Naive thymus-derived CD4-positive, alpha-beta T cell (primary cell): ENCODE measurements at regions of chr17 and their contacts with region 1.

Region 1: DNA sequence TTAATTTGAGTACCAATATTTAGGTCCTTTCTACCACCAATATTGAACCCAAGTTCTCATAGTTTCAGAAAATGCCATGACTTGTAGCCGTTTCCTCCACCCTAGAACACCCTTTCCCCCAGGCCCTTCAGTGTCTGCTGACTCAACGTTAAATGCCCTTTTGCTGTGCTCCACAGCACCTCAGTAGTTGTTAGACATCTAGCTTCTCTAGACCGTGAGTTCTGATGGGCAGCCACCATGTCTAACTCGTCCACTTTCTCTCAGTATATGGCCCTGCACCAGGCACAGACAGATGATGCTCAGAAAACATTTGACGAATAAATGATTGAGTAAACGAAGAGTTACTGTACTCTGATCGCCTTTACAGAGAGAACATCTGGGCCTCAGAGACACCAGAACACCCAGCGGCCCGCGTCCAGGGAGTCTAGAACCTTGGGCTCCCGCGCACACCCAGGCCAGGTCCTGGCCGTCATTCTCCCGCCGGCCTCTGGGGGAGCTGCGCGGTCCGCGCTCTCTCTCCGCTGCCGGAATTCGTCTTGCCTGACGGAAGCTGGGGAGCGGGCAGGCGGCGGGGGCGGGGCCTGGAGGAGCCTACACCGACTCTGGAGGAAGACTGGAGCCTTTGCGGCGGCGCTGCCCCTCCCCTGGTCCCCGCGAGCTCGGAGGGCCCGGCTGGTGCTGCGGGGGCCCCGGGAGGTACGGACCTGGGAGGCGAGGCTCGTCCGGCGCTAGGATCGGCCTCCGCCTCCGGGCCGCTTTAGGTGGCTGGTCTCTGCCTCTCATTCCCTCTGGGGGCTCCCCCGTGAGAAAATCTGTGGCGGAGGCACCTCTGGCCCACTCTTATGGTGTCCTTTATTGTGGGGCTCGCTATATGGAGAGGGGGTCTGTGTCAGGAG is at the start of gene NKIRAS2:
- DNase-seq: peak; percentile 83 to 97 (median 89)
- ATAC-seq: peak; percentile 88
- H3K4me3 ChIP-seq: peak within 1 kb of the TSS; percentile 85
- H3K4me3 Mint-ChIP-seq: peak within 1 kb of the TSS; percentile 91 to 100 (median 99)
- H3K27ac ChIP-seq: peak within 1 kb of the TSS; percentile 84
- H3K27ac Mint-ChIP-seq: peak within 1 kb of the TSS; percentile 77 to 99 (median 90)
- H3K4me1 ChIP-seq: peaks cover 32 to 37% of the 10 kb centered on the region in 2 donors
- H3K4me1 Mint-ChIP-seq: peaks cover 44 to 69% (median 56%) of the 10 kb centered on the region in 7 donors
- H3K27me3 ChIP-seq: no peaks in the 10 kb centered on the region
- H3K27me3 Mint-ChIP-seq: no peaks in the 10 kb centered on the region
- total RNA-seq, gene NKIRAS2: 14.3 to 24.0 (median 20.4) TPM

Region 2: GRCh38 chr17:41918314-41919164 is 101.2 kb before region 1 on chr17 and contains the start of gene ACLY:
- CTCF ChIA-PET with region 1: interaction called, 4 read pairs
- POLR2A ChIA-PET with region 1: no interaction called
- intact Hi-C with region 1: loop called (anchors 1 kb)
- DNase-seq: peak; percentile 88 to 99 (median 92)
- ATAC-seq: peak; percentile 100
- H3K4me3 ChIP-seq: peak within 1 kb of the TSS; percentile 94
- H3K4me3 Mint-ChIP-seq: peak within 1 kb of the TSS; percentile 84 to 99 (median 89)
- H3K27ac ChIP-seq: peak within 1 kb of the TSS; percentile 79
- H3K27ac Mint-ChIP-seq: peak within 1 kb of the TSS; percentile 48 to 97 (median 78)
- H3K4me1 ChIP-seq: peaks cover 8 to 14% of the 10 kb centered on the region in 2 donors
- H3K4me1 Mint-ChIP-seq: peaks cover 29 to 48% (median 35%) of the 10 kb centered on the region in 7 donors
- H3K27me3 ChIP-seq: no peaks in the 10 kb centered on the region
- H3K27me3 Mint-ChIP-seq: no peaks in the 10 kb centered on the region
- total RNA-seq, gene ACLY: 59.2 to 154 (median 70.8) TPM

Region 3: GRCh38 chr17:41966463-41967140 is 53.2 kb before region 1 on chr17 and contains the start of gene CNP:
- CTCF ChIA-PET with region 1: interaction called, 5 read pairs
- POLR2A ChIA-PET with region 1: interaction called, 71 read pairs
- intact Hi-C with region 1: loop called (anchors 1 kb)
- DNase-seq: peak; percentile 84 to 94 (median 88)
- ATAC-seq: peak; percentile 94
- H3K4me3 ChIP-seq: peak within 1 kb of the TSS; percentile 87
- H3K4me3 Mint-ChIP-seq: peak within 1 kb of the TSS; percentile 78 to 93 (median 88)
- H3K27ac ChIP-seq: peak within 1 kb of the TSS; percentile 88
- H3K27ac Mint-ChIP-seq: peak within 1 kb of the TSS; percentile 83 to 96 (median 89)
- H3K4me1 ChIP-seq: peaks cover 10 to 16% of the 10 kb centered on the region in 2 donors
- H3K4me1 Mint-ChIP-seq: peaks cover 24 to 51% (median 36%) of the 10 kb centered on the region in 7 donors
- H3K27me3 ChIP-seq: no peaks in the 10 kb centered on the region
- H3K27me3 Mint-ChIP-seq: peaks cover 0 to 2% (median 0%) of the 10 kb centered on the region in 5 donors
- total RNA-seq, gene CNP: 29.6 to 86.3 (median 32.5) TPM

Region 4: GRCh38 chr17:42058063-42058462 is 38.3 kb after region 1 on chr17:
- CTCF ChIA-PET with region 1: no interaction called
- POLR2A ChIA-PET with region 1: no interaction called
- intact Hi-C with region 1: no loop called
- DNase-seq: no peak
- ATAC-seq: no peak
- H3K4me3 ChIP-seq: no peak overlapping the region
- H3K4me3 Mint-ChIP-seq: no peak overlapping the region
- H3K27ac ChIP-seq: no peak overlapping the region
- H3K27ac Mint-ChIP-seq: no peak overlapping the region
- H3K4me1 ChIP-seq: no peaks in the 10 kb centered on the region
- H3K4me1 Mint-ChIP-seq: peaks cover 0 to 4% (median 3%) of the 10 kb centered on the region in 7 donors
- H3K27me3 ChIP-seq: no peaks in the 10 kb centered on the region
- H3K27me3 Mint-ChIP-seq: peaks cover 6 to 33% (median 13%) of the 10 kb centered on the region in 5 donors

Region 5: GRCh38 chr17:42072323-42073187 is 52.8 kb after region 1 on chr17:
- CTCF ChIA-PET with region 1: no interaction called
- POLR2A ChIA-PET with region 1: no interaction called
- intact Hi-C with region 1: no loop called
- DNase-seq: peak in 1 of 9 donors; percentile 3
- ATAC-seq: peak; percentile 24
- H3K4me3 ChIP-seq: peak overlapping the region; percentile 30
- H3K4me3 Mint-ChIP-seq: peak overlapping the region in 9 of 10 donors; percentile 36 to 78 (median 56)
- H3K27ac ChIP-seq: no peak overlapping the region
- H3K27ac Mint-ChIP-seq: no peak overlapping the region
- H3K4me1 ChIP-seq: peaks cover 7 to 9% of the 10 kb centered on the region in 2 donors
- H3K4me1 Mint-ChIP-seq: peaks cover 0 to 7% (median 5%) of the 10 kb centered on the region in 7 donors
- H3K27me3 ChIP-seq: peaks cover 0 to 7% of the 10 kb centered on the region in 2 donors
- H3K27me3 Mint-ChIP-seq: peaks cover 22 to 37% (median 31%) of the 10 kb centered on the region in 5 donors

Region 6: DNA sequence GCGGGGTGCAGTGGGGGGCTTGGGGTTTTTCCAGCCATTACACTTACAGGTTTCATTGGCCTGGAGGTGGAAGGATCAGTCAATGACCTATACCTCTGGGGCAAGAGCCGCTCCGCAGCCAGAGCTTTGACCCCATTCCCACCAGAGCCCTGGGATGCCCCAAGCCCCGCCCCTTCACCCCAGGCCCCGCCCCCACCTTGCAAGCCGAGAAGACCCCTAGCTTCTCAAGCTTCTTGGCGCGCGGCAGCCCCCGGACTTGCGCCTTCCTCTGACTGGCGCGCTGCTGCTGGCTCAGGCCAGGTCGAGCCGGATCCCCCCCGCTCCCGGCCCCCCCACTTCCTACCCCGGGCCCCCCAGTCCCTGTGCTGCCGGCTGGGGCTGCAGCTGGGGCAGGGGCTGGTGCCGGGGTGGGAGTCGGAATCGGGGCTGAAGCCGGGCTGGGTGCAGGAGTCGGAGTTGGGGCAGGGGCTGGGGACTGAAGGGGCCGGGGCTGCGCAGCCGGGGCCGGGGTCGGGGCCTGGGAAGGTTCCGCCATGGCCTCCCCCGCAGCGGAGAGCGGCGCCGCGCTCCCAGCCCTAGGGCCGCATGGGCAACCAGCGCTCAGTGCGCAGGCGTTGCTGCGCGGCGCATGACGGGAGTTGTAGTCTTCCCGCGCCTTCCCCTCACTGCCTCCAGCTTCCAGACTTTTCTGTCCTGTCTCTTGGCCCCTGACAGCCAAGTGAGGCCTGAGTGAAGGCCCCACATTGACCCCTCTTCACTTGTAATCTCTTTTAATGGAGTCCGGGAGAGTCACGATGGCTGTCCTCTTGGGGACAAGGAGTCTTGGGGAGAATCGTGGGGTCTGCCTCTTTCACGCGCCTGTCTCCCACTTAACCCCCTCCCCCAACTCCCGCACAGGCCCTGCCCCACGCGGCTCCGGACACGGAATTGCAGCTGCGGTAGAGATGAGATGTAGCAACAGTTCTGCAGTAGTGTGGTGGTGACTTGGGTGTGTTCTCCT is 101.3 kb after region 1 on chr17 and contains the start of gene KAT2A:
- CTCF ChIA-PET with region 1: interaction called, 12 read pairs
- POLR2A ChIA-PET with region 1: interaction called, 12 read pairs
- intact Hi-C with region 1: loop called (anchors 1 kb)
- DNase-seq: peak; percentile 48 to 80 (median 68)
- ATAC-seq: peak; percentile 92
- H3K4me3 ChIP-seq: peak within 1 kb of the TSS; percentile 56
- H3K4me3 Mint-ChIP-seq: peak within 1 kb of the TSS; percentile 58 to 85 (median 74)
- H3K27ac ChIP-seq: peak within 1 kb of the TSS; percentile 75
- H3K27ac Mint-ChIP-seq: peak within 1 kb of the TSS in 8 of 9 donors; percentile 31 to 79 (median 68)
- H3K4me1 ChIP-seq: peaks cover 4 to 15% of the 10 kb centered on the region in 2 donors
- H3K4me1 Mint-ChIP-seq: peaks cover 10 to 35% (median 21%) of the 10 kb centered on the region in 7 donors
- H3K27me3 ChIP-seq: no peaks in the 10 kb centered on the region
- H3K27me3 Mint-ChIP-seq: no peaks in the 10 kb centered on the region
- total RNA-seq, gene KAT2A: 39.6 to 71.1 (median 49.1) TPM

Region 7: GRCh38 chr17:42183741-42184711 is 164.3 kb after region 1 on chr17:
- CTCF ChIA-PET with region 1: interaction called, 4 read pairs
- POLR2A ChIA-PET with region 1: interaction called, 3 read pairs
- intact Hi-C with region 1: loop called (anchors 2 to 5 kb)
- DNase-seq: peak; percentile 54 to 92 (median 72)
- ATAC-seq: peak; percentile 78
- H3K4me3 ChIP-seq: peak overlapping the region; percentile 98
- H3K4me3 Mint-ChIP-seq: peak overlapping the region; percentile 85 to 95 (median 90)
- H3K27ac ChIP-seq: peak overlapping the region; percentile 81
- H3K27ac Mint-ChIP-seq: peak overlapping the region; percentile 69 to 94 (median 88)
- H3K4me1 ChIP-seq: peaks cover 15 to 38% of the 10 kb centered on the region in 2 donors
- H3K4me1 Mint-ChIP-seq: peaks cover 21 to 52% (median 41%) of the 10 kb centered on the region in 7 donors
- H3K27me3 ChIP-seq: no peaks in the 10 kb centered on the region
- H3K27me3 Mint-ChIP-seq: peaks cover 0 to 25% (median 8%) of the 10 kb centered on the region in 5 donors

Region 8: DNA sequence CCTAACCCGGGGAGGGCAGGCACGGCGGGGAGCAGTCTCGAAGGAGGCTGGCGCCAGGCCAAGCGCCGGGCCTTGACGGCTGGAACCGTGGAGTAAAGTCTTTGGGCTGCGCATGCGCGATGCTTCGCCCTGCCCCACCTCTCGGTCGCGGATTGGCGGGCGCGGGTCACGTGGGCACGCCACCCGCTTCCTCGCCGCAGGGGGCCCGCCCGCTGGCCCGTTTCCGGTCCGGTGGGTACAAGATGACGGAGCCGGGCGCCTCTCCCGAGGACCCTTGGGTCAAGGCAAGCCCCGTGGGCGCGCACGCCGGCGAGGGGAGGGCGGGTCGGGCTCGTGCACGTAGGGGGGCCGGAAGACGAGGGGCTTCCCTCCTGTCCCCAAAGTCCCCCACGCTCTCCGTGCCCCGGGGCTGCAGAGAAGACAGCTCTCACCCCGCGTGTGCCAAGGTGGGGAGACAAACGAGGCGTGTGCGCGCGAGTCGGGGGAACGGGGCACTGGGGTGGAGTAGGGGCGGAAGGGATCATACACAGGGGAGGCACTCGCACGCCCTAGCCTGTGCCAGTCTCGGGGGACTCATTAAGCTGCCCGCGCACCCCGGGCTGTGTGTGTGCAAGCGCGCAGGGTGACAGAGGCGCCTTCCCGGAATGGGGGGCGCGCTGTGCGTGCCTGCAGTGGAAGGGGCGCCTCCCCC is 547.3 kb after region 1 on chr17 and contains the start of gene MLX:
- CTCF ChIA-PET with region 1: no interaction called
- POLR2A ChIA-PET with region 1: interaction called, 3 read pairs
- intact Hi-C with region 1: loop called in 1 of 2 experiments (anchors 1 kb)
- DNase-seq: peak; percentile 86 to 96 (median 90)
- ATAC-seq: peak; percentile 80
- H3K4me3 ChIP-seq: peak within 1 kb of the TSS; percentile 76
- H3K4me3 Mint-ChIP-seq: peak within 1 kb of the TSS; percentile 80 to 98 (median 95)
- H3K27ac ChIP-seq: peak within 1 kb of the TSS; percentile 92
- H3K27ac Mint-ChIP-seq: peak within 1 kb of the TSS; percentile 87 to 98 (median 95)
- H3K4me1 ChIP-seq: peaks cover 26 to 27% of the 10 kb centered on the region in 2 donors
- H3K4me1 Mint-ChIP-seq: peaks cover 26 to 57% (median 45%) of the 10 kb centered on the region in 7 donors
- H3K27me3 ChIP-seq: no peaks in the 10 kb centered on the region
- H3K27me3 Mint-ChIP-seq: no peaks in the 10 kb centered on the region
- total RNA-seq, gene MLX: 35.3 to 73.9 (median 65.1) TPM

Region 9: GRCh38 chr17:43388359-43389045 is 1368.7 kb after region 1 on chr17:
- CTCF ChIA-PET with region 1: no interaction called
- POLR2A ChIA-PET with region 1: no interaction called
- intact Hi-C with region 1: loop called in 1 of 2 experiments (anchors 5 kb)
- DNase-seq: peak; percentile 92 to 98 (median 95)
- ATAC-seq: peak; percentile 84
- H3K4me3 ChIP-seq: peak overlapping the region; percentile 94
- H3K4me3 Mint-ChIP-seq: peak overlapping the region; percentile 91 to 99 (median 96)
- H3K27ac ChIP-seq: peak overlapping the region; percentile 95
- H3K27ac Mint-ChIP-seq: peak overlapping the region; percentile 95 to 100 (median 98)
- H3K4me1 ChIP-seq: peaks cover 4 to 15% of the 10 kb centered on the region in 2 donors
- H3K4me1 Mint-ChIP-seq: peaks cover 16 to 39% (median 31%) of the 10 kb centered on the region in 7 donors
- H3K27me3 ChIP-seq: no peaks in the 10 kb centered on the region
- H3K27me3 Mint-ChIP-seq: no peaks in the 10 kb centered on the region